Right ventricle myocardium superior (tissue), 1 donor: ENCODE measurements at regions of chr18 and their contacts with region 1.

Region 1: DNA sequence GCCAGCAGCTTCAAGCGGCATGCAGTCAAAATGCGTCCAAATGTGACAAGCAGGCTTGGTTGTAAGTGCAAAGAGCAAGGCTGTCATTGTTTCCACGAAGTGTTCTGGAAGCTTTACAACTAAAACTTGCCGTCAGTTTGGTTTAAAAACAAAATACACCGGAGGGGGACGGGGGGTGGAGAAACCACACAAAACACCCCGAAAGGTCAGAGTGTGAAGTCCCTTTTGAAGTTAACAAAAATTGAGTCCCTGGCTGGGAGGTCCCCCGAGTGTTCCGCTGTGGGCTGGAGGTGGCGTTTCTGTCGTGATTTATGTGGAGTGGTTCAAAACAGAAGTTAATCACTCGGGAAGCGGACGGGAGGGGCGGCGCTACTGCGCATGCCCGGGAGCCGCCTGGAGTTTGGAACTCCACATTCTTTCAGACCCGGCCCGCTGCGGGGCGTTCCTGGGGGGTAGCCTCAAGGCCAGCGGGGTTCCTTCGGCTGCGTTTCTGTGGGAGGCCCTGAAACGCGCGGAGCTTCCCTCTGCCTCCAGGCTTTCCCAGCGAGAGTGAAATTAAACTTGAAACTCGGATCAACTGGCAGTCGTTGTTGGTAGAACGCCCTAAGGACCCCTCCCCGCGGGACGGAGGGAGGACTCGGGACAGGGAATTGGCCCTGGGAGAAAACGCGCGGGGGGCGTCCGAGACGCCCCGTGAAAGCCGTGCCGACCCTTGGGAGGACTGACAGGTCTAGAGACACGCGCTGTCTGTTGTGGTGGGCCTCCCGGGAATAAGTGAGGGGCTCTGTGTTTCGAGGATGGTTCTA is 1.4 kb downstream of the TGIF1 start:
- DNase-seq: peak; percentile 97
- ATAC-seq: peak; percentile 72

Region 2: DNA sequence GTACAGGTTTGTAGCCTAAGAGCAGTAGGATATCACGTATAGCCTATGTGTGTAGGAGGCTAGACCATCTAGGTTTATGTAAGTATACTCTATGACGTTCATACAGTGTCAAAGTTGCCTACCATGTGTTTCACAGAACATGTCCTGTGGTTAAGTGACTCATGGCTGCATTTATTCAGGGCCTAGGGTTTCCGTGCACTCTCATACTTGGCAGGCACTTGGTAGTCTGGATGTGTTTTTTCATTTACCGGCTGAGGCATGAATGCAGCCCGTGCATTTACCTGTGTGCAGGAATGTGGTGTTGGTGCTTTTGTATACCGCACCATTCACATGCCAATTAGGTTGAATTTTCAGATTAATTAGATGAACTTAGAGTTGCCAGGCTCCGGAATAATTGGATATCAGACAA is 146.0 kb before region 1 on chr18:
- intact Hi-C with region 1: no loop called
- DNase-seq: no peak
- ATAC-seq: no peak

Region 3: GRCh38 chr18:3593904-3594661 is 142.7 kb after region 1 on chr18:
- intact Hi-C with region 1: loop called (anchors 2 kb)
- DNase-seq: peak; percentile 86
- ATAC-seq: peak; percentile 86

Region 4: DNA sequence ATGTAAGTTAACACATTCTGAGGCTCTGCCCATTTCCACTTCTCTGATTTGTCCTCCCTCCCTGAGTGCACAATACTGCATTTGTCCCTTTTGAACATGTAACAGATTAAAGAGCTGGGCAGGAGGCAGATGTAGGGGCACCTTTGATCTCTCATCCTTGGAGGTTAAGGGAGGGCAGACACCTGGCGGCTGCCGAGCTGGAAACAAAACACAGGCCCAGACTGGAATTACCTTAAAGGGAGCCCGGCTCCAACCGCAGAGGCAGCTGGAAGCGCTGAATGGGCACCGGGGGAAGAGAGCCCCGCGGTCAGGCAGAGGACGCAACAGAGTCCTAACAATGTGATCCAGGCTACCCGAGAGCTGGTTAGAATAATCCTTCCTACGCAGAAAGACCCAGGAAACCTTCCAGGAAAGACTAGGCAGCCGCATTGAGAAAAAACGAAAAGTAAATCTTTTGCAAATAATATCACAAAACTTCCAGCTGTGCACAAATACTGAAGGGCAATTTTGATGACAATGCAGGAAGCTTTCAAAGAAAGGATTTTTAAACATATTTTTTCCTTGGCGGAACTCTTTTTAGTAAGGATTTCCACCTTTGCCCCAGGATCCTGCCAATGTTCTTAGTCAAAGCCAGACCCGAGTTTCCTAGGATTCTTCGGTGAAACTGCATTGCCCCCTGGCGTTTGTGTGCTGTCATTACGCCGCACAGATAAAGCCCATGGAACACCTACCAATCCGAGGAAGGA is 214.6 kb after region 1 on chr18:
- intact Hi-C with region 1: loop called (anchors 5 kb)
- DNase-seq: peak; percentile 83
- ATAC-seq: peak; percentile 97

Region 5: DNA sequence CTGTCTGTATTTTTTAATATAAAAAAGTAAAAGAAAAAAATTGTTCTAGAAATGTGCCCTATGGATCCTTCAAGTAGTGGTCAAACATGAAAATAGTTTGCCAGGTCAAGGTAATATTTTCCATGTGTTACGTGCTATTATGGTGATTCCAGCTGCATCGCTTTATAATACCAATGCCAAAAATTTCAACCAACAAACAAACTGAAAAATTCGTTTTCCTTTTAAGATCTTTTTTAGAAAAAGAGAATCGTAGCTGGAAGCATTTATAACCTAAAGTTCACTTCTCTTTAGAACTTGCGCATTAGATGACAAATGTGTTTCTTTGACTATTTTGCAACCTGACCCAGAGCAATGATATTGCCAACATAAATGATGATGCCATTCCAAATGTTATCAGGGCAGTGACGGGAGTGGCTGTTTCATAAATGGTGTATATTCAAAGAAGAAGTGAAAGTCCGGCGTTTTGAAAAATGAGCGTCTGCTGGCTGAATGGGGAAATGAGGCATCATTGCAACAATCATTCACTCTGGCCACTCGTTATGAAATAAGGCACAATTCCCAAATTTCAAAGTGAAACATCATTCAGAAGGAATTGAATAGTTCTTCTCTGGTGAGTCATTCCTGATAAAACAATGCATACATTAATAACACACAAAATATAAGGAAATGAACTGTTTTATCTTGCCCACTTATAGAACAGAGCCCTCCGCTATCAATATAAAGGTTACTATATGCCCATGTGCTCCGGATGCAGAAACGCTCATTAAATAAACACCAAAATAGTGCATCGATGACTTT is 296.0 kb after region 1 on chr18:
- intact Hi-C with region 1: no loop called
- DNase-seq: no peak
- ATAC-seq: peak; percentile 39